Heart right ventricle (tissue), 16 donors: ENCODE measurements at regions of chr9 and their contacts with region 1.

Region 1: GRCh38 chr9:95808011-95808410 is 67.5 kb upstream of the ERCC6L2 start:
- DNase-seq: no peak
- ATAC-seq: peak in 1 of 8 donors; percentile 27
- H3K4me3 ChIP-seq: no peak overlapping the region
- H3K27ac ChIP-seq: peak overlapping the region in 1 of 10 donors; percentile 36
- H3K4me1 ChIP-seq: peaks cover 0 to 12% (median 10%) of the 10 kb centered on the region in 9 donors
- H3K27me3 ChIP-seq: no peaks in the 10 kb centered on the region
- CTCF ChIP-seq: no peak

Region 2: GRCh38 chr9:95167998-95168397 is 640.0 kb before region 1 on chr9:
- intact Hi-C with region 1: loop called in 1 of 10 experiments (anchors 5 kb)
- DNase-seq: peak in 1 of 2 donors; percentile 72
- ATAC-seq: peak in 3 of 8 donors; percentile 35 to 60 (median 46)
- H3K4me3 ChIP-seq: no peak overlapping the region
- H3K27ac ChIP-seq: no peak overlapping the region
- H3K4me1 ChIP-seq: peaks cover 0 to 12% (median 0%) of the 10 kb centered on the region in 9 donors
- H3K27me3 ChIP-seq: no peaks in the 10 kb centered on the region
- CTCF ChIP-seq: peak; percentile 52 to 86 (median 73)